GM13976 (cell line): ENCODE measurements at regions of chr1 and their contacts with region 1.

Region 1: GRCh38 chr1:94801919-94802546 is 18.1 kb upstream of the SLC44A3 start:
- DNase-seq: peak; percentile 50
- CTCF ChIP-seq: no peak

Region 2: GRCh38 chr1:94335950-94336349 is 466.1 kb before region 1 on chr1:
- in situ Hi-C with region 1: loop called (anchors 25 kb)
- DNase-seq: peak; percentile 38
- CTCF ChIP-seq: peak; percentile 60

Region 3: GRCh38 chr1:94481473-94481933 is 320.5 kb before region 1 on chr1:
- in situ Hi-C with region 1: loop called (anchors 10 kb)
- DNase-seq: peak; percentile 50
- CTCF ChIP-seq: peak; percentile 80

Region 4: GRCh38 chr1:94672934-94673333 is 129.1 kb before region 1 on chr1:
- in situ Hi-C with region 1: no loop called
- DNase-seq: no peak
- CTCF ChIP-seq: no peak

Region 5: GRCh38 chr1:94955767-94956632 is 154.0 kb after region 1 on chr1:
- in situ Hi-C with region 1: no loop called
- DNase-seq: no peak
- CTCF ChIP-seq: no peak